Activated CD4-positive, alpha-beta T cell treated with anti-CD3 and anti-CD28 coated beads for 36 hours (primary cell): ENCODE measurements at regions of chr2 and their contacts with region 1.

Region 1: DNA sequence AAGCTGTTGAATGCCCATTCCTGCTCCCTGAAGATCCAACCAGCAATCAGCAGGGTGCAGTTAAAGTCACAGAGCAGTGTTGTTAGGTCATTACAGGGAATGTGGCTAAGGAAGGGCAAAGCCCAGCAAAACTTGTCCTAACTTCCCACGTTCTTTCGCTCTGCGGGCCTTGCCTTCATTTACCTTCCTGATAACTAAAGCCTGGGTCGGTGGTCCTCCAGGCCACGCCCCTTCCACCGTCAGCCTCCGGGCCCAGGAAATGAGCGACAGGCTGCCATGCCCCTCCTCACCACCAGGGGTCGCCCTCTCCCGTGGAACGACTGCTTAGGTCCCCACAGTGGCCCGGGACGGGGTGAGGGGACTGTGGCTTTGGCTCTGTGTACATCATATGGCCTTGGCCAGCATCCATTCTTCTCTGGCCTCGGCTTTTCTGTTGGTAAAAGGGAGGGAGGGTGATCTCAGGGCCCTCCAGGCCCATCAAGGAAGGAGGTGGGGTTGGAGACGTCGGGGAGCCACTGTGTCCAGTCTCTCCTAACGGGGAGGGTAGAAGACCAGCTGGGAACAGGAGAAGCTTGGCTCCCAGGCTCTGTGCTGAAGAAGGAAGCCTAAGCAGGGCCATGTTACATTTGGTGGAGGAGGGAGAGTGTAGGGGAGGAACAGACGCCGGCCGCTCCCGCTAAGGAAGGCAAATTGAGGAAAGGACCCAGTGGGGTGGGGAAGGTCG is 2.2 kb downstream of the SH2D6 start:
- DNase-seq: peak; percentile 95
- ATAC-seq: peak; percentile 76
- H3K4me3 Mint-ChIP-seq: peak overlapping the region; percentile 38
- H3K27ac Mint-ChIP-seq: peak overlapping the region; percentile 84
- H3K4me1 Mint-ChIP-seq: peaks cover 21% of the 10 kb centered on the region
- H3K27me3 Mint-ChIP-seq: no peaks in the 10 kb centered on the region

Region 2: DNA sequence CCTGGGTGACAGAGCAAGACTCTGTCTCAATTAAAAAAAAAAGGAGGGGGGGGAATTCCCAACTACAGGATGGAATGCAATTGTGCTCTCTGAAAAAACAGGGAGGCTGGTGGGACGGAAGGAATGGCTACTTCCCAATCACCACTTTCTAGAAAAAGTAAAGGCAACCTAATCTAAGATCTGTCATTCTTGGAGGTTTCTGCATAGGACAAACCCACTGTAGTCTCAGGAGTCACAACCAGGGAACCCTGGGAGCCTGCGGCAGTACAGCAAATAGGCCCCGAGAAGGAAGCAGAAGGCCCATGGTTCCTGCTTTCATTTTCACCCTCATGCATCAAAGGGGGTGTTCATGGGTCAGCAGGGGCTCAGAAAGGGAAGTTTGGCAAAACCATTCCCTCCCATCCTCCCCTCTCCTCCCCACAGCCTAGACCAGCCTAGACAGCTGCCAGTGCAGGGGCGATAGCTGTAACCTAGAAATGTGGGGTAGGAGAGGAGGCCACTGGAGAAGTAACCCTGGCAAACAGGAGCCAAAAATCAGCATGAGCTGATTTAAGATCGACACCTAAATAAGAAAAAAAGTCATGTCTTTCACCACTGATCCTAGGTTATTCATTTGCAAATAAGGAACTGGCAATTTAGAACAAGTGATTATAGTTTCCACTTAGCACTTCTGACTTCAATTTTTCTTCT is 587.8 kb before region 1 on chr2:
- CTCF ChIA-PET with region 1: no interaction called
- POLR2A ChIA-PET with region 1: no interaction called
- intact Hi-C with region 1: no loop called
- DNase-seq: peak; percentile 54
- ATAC-seq: peak; percentile 60
- H3K4me3 Mint-ChIP-seq: peak overlapping the region; percentile 46
- H3K27ac Mint-ChIP-seq: peak overlapping the region; percentile 91
- H3K4me1 Mint-ChIP-seq: peaks cover 35% of the 10 kb centered on the region
- H3K27me3 Mint-ChIP-seq: no peaks in the 10 kb centered on the region

Region 3: DNA sequence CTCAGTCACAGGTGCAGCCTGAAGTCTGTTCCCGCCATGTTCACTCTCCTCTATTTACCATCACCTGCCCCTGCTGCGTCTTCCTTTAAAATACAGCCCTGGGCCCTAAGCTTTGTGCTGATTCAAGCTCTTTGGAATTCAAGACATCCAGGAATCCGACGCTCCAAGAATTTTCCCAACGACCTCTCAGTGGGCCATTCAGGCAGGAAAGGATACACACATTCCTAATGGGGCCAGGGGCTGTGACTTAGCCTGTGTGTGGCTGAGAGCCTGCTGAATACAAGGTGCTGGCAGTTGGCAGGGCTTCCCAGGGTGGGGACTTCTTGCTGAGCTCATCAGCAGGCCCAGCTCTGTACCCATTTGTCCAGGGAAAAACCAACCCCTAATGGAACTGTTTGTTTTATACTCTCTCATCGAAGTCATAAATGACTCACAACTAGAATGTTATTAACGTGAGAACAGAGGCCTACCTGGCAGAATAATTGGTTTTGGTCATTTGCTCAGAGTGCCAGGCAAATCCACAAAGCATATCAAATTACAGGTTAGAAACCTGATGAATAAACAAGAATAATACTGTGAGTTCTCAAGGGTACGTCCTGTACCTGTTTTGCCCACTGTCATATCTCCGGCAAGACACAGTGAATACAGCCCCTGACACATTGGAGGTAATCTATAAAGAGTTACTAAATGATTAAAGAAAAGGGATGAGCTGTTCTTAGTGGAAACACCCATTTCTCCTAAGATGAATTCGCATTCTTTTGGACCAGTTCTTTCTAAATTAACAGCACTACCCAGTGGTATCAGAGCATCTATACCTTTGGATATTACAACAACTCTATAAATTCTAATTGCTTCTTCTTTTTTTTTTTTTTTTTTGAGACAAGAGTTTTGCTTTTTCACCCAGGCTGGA is 462.3 kb before region 1 on chr2:
- CTCF ChIA-PET with region 1: no interaction called
- POLR2A ChIA-PET with region 1: no interaction called
- intact Hi-C with region 1: no loop called
- DNase-seq: no peak
- ATAC-seq: peak; percentile 43
- H3K4me3 Mint-ChIP-seq: no peak overlapping the region
- H3K27ac Mint-ChIP-seq: peak overlapping the region; percentile 37
- H3K4me1 Mint-ChIP-seq: peaks cover 24% of the 10 kb centered on the region
- H3K27me3 Mint-ChIP-seq: no peaks in the 10 kb centered on the region

Region 4: GRCh38 chr2:85354286-85355072 is 66.2 kb before region 1 on chr2 and contains the starts of genes ELMOD3 and RETSAT:
- CTCF ChIA-PET with region 1: interaction called, 3 read pairs
- POLR2A ChIA-PET with region 1: no interaction called
- intact Hi-C with region 1: loop called (anchors 1 kb)
- DNase-seq: peak; percentile 98
- ATAC-seq: peak; percentile 100
- H3K4me3 Mint-ChIP-seq: peak within 1 kb of the TSS; percentile 89
- H3K27ac Mint-ChIP-seq: peak within 1 kb of the TSS; percentile 99
- H3K4me1 Mint-ChIP-seq: peaks cover 34% of the 10 kb centered on the region
- H3K27me3 Mint-ChIP-seq: no peaks in the 10 kb centered on the region
- total RNA-seq, gene ELMOD3: 11.2 to 12.9 TPM
- total RNA-seq, gene RETSAT: 18.1 to 18.7 TPM

Region 5: DNA sequence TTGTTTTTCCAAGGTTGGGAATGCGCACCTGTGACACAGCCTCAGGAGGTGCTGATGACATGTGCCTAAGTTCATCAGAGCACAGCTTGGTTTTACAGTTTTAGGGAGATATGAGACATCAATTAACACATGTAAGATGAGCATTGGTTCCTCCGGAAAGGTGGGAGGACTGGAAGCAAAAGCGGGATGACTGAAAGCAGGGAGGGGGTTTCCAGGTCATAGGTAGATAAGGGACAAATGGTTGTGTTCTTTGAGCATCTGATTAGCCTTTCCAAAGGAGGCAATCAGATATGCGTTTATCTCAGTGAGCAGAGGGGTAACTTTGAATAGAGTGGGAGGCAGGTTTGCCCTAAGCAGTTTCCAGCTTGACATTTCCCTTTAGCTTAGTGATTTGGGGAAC is 36.8 kb before region 1 on chr2:
- CTCF ChIA-PET with region 1: no interaction called
- POLR2A ChIA-PET with region 1: no interaction called
- intact Hi-C with region 1: no loop called
- DNase-seq: no peak
- ATAC-seq: no peak
- H3K4me3 Mint-ChIP-seq: no peak overlapping the region
- H3K27ac Mint-ChIP-seq: peak overlapping the region; percentile 3
- H3K4me1 Mint-ChIP-seq: no peaks in the 10 kb centered on the region
- H3K27me3 Mint-ChIP-seq: no peaks in the 10 kb centered on the region

Region 6: GRCh38 chr2:85538486-85539360 is 118.0 kb after region 1 on chr2 and contains the start of gene MAT2A:
- CTCF ChIA-PET with region 1: interaction called, 9 read pairs
- POLR2A ChIA-PET with region 1: interaction called, 26 read pairs
- intact Hi-C with region 1: loop called (anchors 1 kb)
- DNase-seq: peak; percentile 93
- ATAC-seq: peak; percentile 79
- H3K4me3 Mint-ChIP-seq: peak within 1 kb of the TSS; percentile 95
- H3K27ac Mint-ChIP-seq: peak within 1 kb of the TSS; percentile 99
- H3K4me1 Mint-ChIP-seq: peaks cover 43% of the 10 kb centered on the region
- H3K27me3 Mint-ChIP-seq: no peaks in the 10 kb centered on the region
- total RNA-seq, gene MAT2A: 226 to 259 TPM

Region 7: DNA sequence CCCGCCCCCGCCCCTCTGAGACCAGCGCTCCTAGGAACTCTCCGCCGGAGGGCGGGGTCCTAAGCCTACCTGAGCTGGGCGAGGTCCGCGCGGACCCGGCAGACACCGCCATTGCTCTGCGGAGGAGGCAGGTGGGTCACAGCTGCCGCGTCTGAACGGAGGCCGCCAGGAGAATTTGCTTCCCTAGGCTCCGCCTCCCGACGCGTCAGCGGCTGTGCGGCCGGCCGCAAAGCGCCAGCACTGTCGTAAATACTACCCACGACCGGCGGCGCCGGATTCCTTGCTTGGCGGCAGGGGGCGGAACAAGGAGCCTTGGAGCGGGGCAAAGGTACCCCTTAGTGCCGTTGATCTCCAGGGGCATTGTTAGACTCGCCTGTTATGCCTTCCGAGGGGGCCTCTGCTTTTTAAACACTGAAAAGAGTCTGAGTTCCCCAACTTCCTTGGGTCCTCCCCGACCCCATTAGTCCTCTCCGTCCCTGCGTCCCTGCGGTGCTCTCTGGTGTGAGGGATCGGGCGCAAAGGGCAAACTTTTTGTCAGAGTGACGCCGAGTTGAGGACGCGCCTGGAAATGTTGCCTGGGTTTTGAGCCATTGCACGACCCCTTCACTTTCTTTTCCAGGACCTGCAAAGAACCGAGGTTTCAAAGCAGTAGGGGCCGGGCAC is 140.8 kb after region 1 on chr2 and contains the start of gene GGCX:
- CTCF ChIA-PET with region 1: interaction called, 205 read pairs
- POLR2A ChIA-PET with region 1: interaction called, 6 read pairs
- intact Hi-C with region 1: loop called in 1 of 2 experiments (anchors 1 kb)
- DNase-seq: peak; percentile 98
- ATAC-seq: peak; percentile 94
- H3K4me3 Mint-ChIP-seq: peak within 1 kb of the TSS; percentile 95
- H3K27ac Mint-ChIP-seq: peak within 1 kb of the TSS; percentile 93
- H3K4me1 Mint-ChIP-seq: peaks cover 33% of the 10 kb centered on the region
- H3K27me3 Mint-ChIP-seq: no peaks in the 10 kb centered on the region
- total RNA-seq, gene GGCX: 20.1 to 22.2 TPM

Region 8: GRCh38 chr2:85611705-85612587 is 191.2 kb after region 1 on chr2 and contains the start of gene C2orf68:
- CTCF ChIA-PET with region 1: no interaction called
- POLR2A ChIA-PET with region 1: no interaction called
- intact Hi-C with region 1: loop called in 1 of 2 experiments (anchors 1 kb)
- DNase-seq: peak; percentile 94
- ATAC-seq: peak; percentile 76
- H3K4me3 Mint-ChIP-seq: peak within 1 kb of the TSS; percentile 97
- H3K27ac Mint-ChIP-seq: peak within 1 kb of the TSS; percentile 96
- H3K4me1 Mint-ChIP-seq: peaks cover 14% of the 10 kb centered on the region
- H3K27me3 Mint-ChIP-seq: no peaks in the 10 kb centered on the region
- total RNA-seq, gene C2orf68: 33.7 to 47.2 TPM

Region 9: DNA sequence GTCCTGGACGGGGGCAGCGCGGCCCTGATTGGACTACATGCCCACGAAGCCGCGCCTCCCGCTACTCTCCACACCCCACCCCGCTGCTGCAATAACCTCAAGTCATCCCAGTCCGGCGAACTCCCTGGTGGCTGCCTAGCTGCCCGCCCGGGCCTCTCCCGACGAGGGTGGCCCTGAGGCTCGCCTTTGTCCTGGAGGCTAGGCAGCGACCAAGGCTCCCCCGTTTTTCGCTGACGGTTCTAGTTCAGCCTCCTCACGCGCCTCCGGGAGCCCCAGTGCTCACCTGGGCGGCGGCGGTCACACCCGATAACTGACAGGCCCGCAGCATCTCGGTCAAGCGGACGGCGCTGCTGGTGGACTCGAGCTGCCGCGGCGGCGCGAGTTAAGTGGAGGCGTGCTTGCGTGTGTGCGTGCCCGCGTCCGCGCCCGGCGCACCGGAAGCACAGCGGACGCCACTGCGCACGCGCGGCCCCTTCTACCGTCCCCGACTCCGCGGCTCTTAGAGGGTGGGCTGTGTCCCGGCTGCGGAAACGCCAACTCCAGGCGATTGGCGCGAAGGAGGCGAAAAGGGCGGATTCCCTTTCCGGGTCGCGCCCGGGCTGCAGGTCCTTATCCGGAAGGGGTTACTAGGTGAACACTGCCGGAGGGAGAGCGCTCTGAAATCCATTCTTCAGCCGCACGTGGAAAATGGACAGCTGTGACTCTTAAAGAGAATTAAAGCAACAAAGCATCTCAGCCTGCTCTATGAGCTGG is 774.5 kb after region 1 on chr2 and contains the start of gene IMMT:
- CTCF ChIA-PET with region 1: no interaction called
- POLR2A ChIA-PET with region 1: no interaction called
- intact Hi-C with region 1: loop called in 1 of 2 experiments (anchors 10 kb)
- DNase-seq: peak; percentile 97
- ATAC-seq: peak; percentile 93
- H3K4me3 Mint-ChIP-seq: peak within 1 kb of the TSS; percentile 81
- H3K27ac Mint-ChIP-seq: peak within 1 kb of the TSS; percentile 92
- H3K4me1 Mint-ChIP-seq: peaks cover 44% of the 10 kb centered on the region
- H3K27me3 Mint-ChIP-seq: no peaks in the 10 kb centered on the region
- total RNA-seq, gene IMMT: 172 to 182 TPM